ENCODE measurements at regions of chr6 and their contacts with region 1.

Region 1: DNA sequence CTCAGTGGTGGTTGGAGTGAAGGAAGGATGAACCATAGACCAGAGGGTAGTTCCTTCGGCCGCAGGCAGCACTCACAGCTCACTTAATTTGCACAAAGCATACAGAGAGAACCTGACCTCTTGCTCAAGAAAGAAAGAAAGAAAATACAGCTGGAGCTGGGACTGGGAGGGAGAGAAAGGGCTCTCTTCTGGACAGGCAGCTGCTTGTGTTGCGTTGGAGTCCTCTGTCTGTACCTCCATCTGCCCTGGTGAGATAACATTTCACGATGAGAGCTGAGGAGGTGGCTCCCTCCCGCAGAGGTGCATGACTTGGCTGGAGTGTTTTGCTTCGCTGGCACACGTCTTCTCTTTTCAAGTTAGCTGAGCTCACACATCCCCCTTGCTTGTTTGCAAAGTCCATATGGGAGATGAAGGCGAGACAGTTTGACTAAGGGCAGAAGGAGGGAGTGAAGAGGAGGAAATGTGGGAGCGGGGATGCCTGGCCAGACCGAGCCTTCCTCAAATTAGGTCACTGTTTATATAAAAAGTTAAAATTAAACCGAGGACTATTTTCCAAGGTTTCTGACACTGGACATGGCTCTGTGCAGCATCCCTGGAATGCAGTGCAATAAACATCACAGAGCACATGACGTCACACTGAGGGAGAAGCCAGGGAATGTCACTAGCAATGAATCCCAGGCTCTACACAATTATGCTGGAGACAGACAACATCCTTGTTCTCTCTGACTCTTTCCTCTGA is 359.4 kb downstream of the CD83 start:
- DNase-seq: peak; percentile 74
- H3K4me3 ChIP-seq: no peak overlapping the region
- H3K27ac ChIP-seq: peak overlapping the region; percentile 74 to 82 (median 79)
- H3K4me1 ChIP-seq: peaks cover 6 to 16% (median 15%) of the 10 kb centered on the region in 4 donors
- H3K27me3 ChIP-seq: no peaks in the 10 kb centered on the region
- CTCF ChIP-seq: no peak
- EP300 ChIP-seq: peak; percentile 97
- POLR2A ChIP-seq: no peak

Region 2: DNA sequence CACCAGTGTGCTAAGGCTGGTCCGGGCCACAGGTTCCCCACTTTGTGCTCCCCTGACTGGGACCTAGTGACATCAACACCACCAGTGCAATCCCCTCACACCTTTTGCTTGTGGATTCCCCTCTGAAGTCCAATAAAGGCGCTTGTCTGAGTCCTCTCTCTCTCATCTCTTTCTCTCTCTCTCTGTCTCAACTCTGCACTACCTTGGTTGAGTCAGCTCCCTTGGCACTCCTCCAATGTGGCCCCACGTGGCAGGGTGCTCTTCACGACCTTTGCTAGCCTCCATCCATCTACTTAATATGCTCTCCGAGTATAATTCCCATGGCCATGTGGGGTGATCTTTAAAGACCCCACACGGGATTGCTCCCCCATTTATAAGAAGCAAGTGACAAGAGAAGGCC is 25.6 kb after region 1 on chr6:
- in situ Hi-C with region 1: no loop called
- intact Hi-C with region 1: no loop called
- DNase-seq: no peak
- H3K4me3 ChIP-seq: no peak overlapping the region
- H3K27ac ChIP-seq: no peak overlapping the region
- H3K4me1 ChIP-seq: peaks cover 0 to 8% (median 3%) of the 10 kb centered on the region in 4 donors
- H3K27me3 ChIP-seq: no peaks in the 10 kb centered on the region
- CTCF ChIP-seq: no peak
- EP300 ChIP-seq: no peak
- POLR2A ChIP-seq: no peak

Region 3: DNA sequence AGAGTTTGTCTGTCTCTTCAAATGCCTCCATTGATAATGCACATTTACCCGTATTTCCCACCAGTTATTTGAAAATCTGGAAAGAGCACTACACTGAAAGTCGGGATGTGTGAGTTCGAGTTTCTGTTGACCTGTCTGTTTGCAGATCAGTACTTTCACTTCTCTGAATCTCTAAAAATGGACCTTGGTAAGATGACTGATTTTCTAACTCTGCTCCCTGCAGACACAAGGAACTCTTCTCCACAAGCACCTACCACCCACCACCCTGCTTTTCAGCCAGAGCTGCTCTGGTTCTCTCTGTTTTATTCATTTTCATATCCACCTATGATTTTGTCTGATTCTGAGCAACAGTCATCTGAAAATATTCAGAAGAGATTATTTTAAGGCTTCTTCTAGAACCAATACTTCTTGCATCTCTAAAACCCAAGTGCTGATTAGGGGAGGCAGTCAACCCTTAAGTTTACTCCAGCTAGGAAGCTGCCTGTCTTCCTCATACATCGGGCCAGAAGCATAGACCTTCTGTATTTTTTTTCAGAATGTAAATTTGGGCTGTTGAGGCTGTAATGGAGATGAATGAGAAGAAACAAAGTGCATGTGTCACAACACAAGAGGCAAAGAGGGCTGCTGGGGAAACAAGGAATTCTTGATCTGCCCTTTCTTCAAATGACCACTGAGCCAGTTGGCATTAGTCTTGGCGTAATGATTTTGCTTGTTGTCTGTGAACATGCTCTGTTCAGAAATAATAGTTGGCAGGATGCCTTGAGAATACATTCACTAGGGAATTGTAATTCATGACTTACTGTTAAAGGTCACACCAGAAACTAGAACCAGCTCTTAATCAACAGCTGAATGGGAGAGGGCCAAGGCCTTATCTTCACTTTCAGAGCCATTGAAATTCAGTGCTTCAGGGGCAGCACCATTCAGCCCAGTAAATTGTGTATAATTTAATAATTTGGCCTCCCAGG is 1566.5 kb after region 1 on chr6:
- in situ Hi-C with region 1: no loop called
- intact Hi-C with region 1: loop called (anchors 10 kb)
- DNase-seq: no peak
- H3K4me3 ChIP-seq: no peak overlapping the region
- H3K27ac ChIP-seq: no peak overlapping the region
- H3K4me1 ChIP-seq: no peaks in the 10 kb centered on the region
- H3K27me3 ChIP-seq: no peaks in the 10 kb centered on the region
- CTCF ChIP-seq: no peak
- EP300 ChIP-seq: no peak
- POLR2A ChIP-seq: no peak

Region 4: GRCh38 chr6:16136621-16137450 is 1659.9 kb after region 1 on chr6:
- in situ Hi-C with region 1: no loop called
- intact Hi-C with region 1: loop called (anchors 5 kb)
- DNase-seq: no peak
- H3K4me3 ChIP-seq: peak overlapping the region in 2 of 4 donors; percentile 8 to 20
- H3K27ac ChIP-seq: peak overlapping the region; percentile 61 to 99 (median 81)
- H3K4me1 ChIP-seq: peaks cover 56 to 80% (median 74%) of the 10 kb centered on the region in 4 donors
- H3K27me3 ChIP-seq: no peaks in the 10 kb centered on the region
- CTCF ChIP-seq: no peak
- EP300 ChIP-seq: no peak
- POLR2A ChIP-seq: no peak